ENCODE measurements at regions of chr4 and their contacts with region 1.

Region 1: GRCh38 chr4:116636917-116637316 is 448.5 kb downstream of the TRAM1L1 start:
- DNase-seq: peak; percentile 72
- H3K4me3 ChIP-seq: peak overlapping the region; percentile 38
- H3K27ac ChIP-seq: peak overlapping the region; percentile 80
- H3K4me1 ChIP-seq: peaks cover 64% of the 10 kb centered on the region
- CTCF ChIP-seq: no peak

Region 2: DNA sequence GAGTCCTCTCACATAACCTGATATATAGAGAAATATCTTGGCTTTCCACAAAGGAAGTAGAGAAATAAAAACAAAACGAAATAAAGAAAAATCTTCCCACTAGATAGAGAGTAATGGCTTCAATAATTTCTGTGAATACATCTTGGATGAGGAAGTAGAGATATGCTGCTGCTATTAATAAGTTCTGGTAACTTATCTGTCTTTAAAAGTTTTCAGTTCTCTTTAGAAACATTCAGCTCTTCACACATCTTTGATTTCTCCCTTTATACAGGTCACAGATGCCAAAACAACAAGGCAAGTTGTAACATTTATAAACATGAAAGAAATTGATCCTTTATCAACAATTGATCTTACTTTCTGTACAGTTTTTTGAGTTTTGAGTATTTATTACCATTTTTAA is 167.3 kb before region 1 on chr4:
- CTCF ChIA-PET with region 1: no interaction called
- POLR2A ChIA-PET with region 1: interaction called, 3 read pairs
- intact Hi-C with region 1: loop called (anchors 5 kb)
- DNase-seq: peak; percentile 41
- H3K4me3 ChIP-seq: peak overlapping the region; percentile 38
- H3K27ac ChIP-seq: peak overlapping the region; percentile 67
- H3K4me1 ChIP-seq: peaks cover 38% of the 10 kb centered on the region
- CTCF ChIP-seq: no peak

Measured in OCI-LY7 (cell line).